GM12878 (cell line): ENCODE measurements at regions of chr2 and their contacts with region 1.

Region 1: GRCh38 chr2:55050133-55050994 is at the start of gene RTN4:
- DNase-seq: peak; percentile 98
- ATAC-seq: peak; percentile 85
- H3K4me3 ChIP-seq: peak within 1 kb of the TSS; percentile 89
- H3K27ac ChIP-seq: peak within 1 kb of the TSS; percentile 86
- H3K4me1 ChIP-seq: peaks cover 10% of the 10 kb centered on the region; the same call in 1 of the 2 replicates
- H3K27me3 ChIP-seq: no peaks in the 10 kb centered on the region
- CTCF ChIP-seq: peak in 1 of 3 experiments; percentile 18; a peak in 1 of 6 replicates
- EP300 ChIP-seq: 0 out of 4 replicates have a peak, but pooled peaks of 1 of the 2 experiments have one; percentile 27
- POLR2A ChIP-seq: peak; percentile 100
- RAD21 ChIP-seq: no peak
- polyA plus RNA-seq, gene RTN4: 68.0 to 112 TPM

Region 2: GRCh38 chr2:54570925-54571694 is 479.3 kb before region 1 on chr2:
- CTCF ChIA-PET with region 1: no interaction called
- POLR2A ChIA-PET with region 1: no interaction called
- RAD21 ChIA-PET with region 1: no interaction called
- SMC1A ChIA-PET with region 1: no interaction called
- in situ Hi-C with region 1: no loop called
- intact Hi-C with region 1: loop called (anchors 10 kb)
- DNase-seq: peak; percentile 98
- ATAC-seq: peak; percentile 55
- H3K4me3 ChIP-seq: peak overlapping the region; percentile 49; the same call in 1 of the 2 replicates
- H3K27ac ChIP-seq: peak overlapping the region; percentile 100
- H3K4me1 ChIP-seq: peaks cover 73% of the 10 kb centered on the region
- H3K27me3 ChIP-seq: no peaks in the 10 kb centered on the region
- CTCF ChIP-seq: no peak
- EP300 ChIP-seq: peak; percentile 80 to 96
- POLR2A ChIP-seq: peak; percentile 74
- RAD21 ChIP-seq: no peak; the same call in 1 of the 2 replicates

Region 3: GRCh38 chr2:55010149-55010591 is 40.2 kb before region 1 on chr2:
- CTCF ChIA-PET with region 1: interaction called, 14 read pairs
- POLR2A ChIA-PET with region 1: interaction called, 9 read pairs
- RAD21 ChIA-PET with region 1: interaction called, 27 read pairs
- SMC1A ChIA-PET with region 1: interaction called, 98 read pairs
- in situ Hi-C with region 1: no loop called
- intact Hi-C with region 1: loop called (anchors 2 kb)
- DNase-seq: peak; percentile 60
- ATAC-seq: peak; percentile 93
- H3K4me3 ChIP-seq: peak overlapping the region; percentile 57
- H3K27ac ChIP-seq: peak overlapping the region; percentile 45
- H3K4me1 ChIP-seq: peaks cover 15% of the 10 kb centered on the region; the same call in 1 of the 2 replicates
- H3K27me3 ChIP-seq: no peaks in the 10 kb centered on the region
- CTCF ChIP-seq: no peak
- EP300 ChIP-seq: no peak
- POLR2A ChIP-seq: peak; percentile 53; the same call in 1 of the 2 replicates
- RAD21 ChIP-seq: no peak

Region 4: GRCh38 chr2:55033066-55033742 is 17.2 kb before region 1 on chr2:
- CTCF ChIA-PET with region 1: interaction called, 22 read pairs
- POLR2A ChIA-PET with region 1: interaction called, 37 read pairs
- RAD21 ChIA-PET with region 1: interaction called, 11 read pairs
- SMC1A ChIA-PET with region 1: interaction called, 18 read pairs
- in situ Hi-C with region 1: no loop called
- intact Hi-C with region 1: loop called (anchors 1 kb)
- DNase-seq: peak; percentile 62
- ATAC-seq: peak; percentile 96
- H3K4me3 ChIP-seq: peak overlapping the region; percentile 2; the same call in 1 of the 2 replicates
- H3K27ac ChIP-seq: peak overlapping the region; percentile 32
- H3K4me1 ChIP-seq: peaks cover 19% of the 10 kb centered on the region
- H3K27me3 ChIP-seq: no peaks in the 10 kb centered on the region
- CTCF ChIP-seq: no peak
- EP300 ChIP-seq: no peak
- POLR2A ChIP-seq: no peak
- RAD21 ChIP-seq: no peak

Region 5: GRCh38 chr2:55159037-55159651 is 108.8 kb after region 1 on chr2:
- CTCF ChIA-PET with region 1: interaction called, 146 read pairs
- POLR2A ChIA-PET with region 1: interaction called, 10 read pairs
- RAD21 ChIA-PET with region 1: interaction called, 107 read pairs
- SMC1A ChIA-PET with region 1: interaction called, 11 read pairs
- in situ Hi-C with region 1: no loop called
- intact Hi-C with region 1: no loop called
- DNase-seq: no peak
- ATAC-seq: peak; percentile 71
- H3K4me3 ChIP-seq: no peak overlapping the region
- H3K27ac ChIP-seq: peak overlapping the region; percentile 29; the same call in 1 of the 2 replicates
- H3K4me1 ChIP-seq: peaks cover 10% of the 10 kb centered on the region
- H3K27me3 ChIP-seq: no peaks in the 10 kb centered on the region
- CTCF ChIP-seq: no peak
- EP300 ChIP-seq: no peak
- POLR2A ChIP-seq: no peak
- RAD21 ChIP-seq: no peak

Region 6: GRCh38 chr2:55232084-55232862 is 181.9 kb after region 1 on chr2 and contains the starts of genes CLHC1 and RPS27A:
- CTCF ChIA-PET with region 1: no interaction called
- POLR2A ChIA-PET with region 1: no interaction called
- RAD21 ChIA-PET with region 1: no interaction called
- SMC1A ChIA-PET with region 1: no interaction called
- in situ Hi-C with region 1: no loop called
- intact Hi-C with region 1: loop called (anchors 5 kb)
- DNase-seq: peak; percentile 85
- ATAC-seq: peak; percentile 85
- H3K4me3 ChIP-seq: peak within 1 kb of the TSS; percentile 93
- H3K27ac ChIP-seq: peak within 1 kb of the TSS; percentile 98
- H3K4me1 ChIP-seq: peaks cover 3% of the 10 kb centered on the region; the same call in 1 of the 2 replicates
- H3K27me3 ChIP-seq: no peaks in the 10 kb centered on the region
- CTCF ChIP-seq: no peak
- EP300 ChIP-seq: 0 out of 4 replicates have a peak, but pooled peaks of 1 of the 2 experiments have one; percentile 19
- POLR2A ChIP-seq: peak; percentile 98
- RAD21 ChIP-seq: no peak
- polyA plus RNA-seq, gene CLHC1: 2.6 to 3.2 TPM
- polyA plus RNA-seq, gene RPS27A: 3,416 to 4,705 TPM